Heart right ventricle (tissue), 16 donors: ENCODE measurements at regions of chr2 and their contacts with region 1.

Region 1: DNA sequence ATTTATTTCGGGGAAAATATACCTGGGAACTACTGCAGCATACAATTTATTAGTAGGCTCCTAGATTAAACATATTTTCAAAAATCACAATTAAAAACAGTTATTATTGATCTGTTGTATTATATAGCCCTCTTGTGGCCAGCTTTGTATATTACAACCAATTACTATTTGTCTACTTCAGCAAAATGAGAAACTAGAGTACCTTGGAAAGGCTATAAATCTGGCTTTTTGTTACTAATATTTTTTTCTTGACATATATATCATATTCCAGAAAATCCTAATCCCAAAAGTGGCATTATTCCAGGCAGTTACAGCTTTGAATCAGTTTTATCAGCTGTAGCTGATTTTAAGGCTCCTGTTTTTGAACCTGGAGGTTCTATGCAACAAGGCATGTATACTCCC is 101.2 kb downstream of the UBR3 start:
- DNase-seq: peak in 1 of 2 donors; percentile 8
- ATAC-seq: peak in 1 of 8 donors; percentile 38
- H3K4me3 ChIP-seq: no peak overlapping the region
- H3K27ac ChIP-seq: no peak overlapping the region
- H3K4me1 ChIP-seq: peaks cover 0 to 3% (median 0%) of the 10 kb centered on the region in 9 donors
- H3K27me3 ChIP-seq: no peaks in the 10 kb centered on the region
- CTCF ChIP-seq: peak; percentile 56 to 82 (median 72)

Region 2: DNA sequence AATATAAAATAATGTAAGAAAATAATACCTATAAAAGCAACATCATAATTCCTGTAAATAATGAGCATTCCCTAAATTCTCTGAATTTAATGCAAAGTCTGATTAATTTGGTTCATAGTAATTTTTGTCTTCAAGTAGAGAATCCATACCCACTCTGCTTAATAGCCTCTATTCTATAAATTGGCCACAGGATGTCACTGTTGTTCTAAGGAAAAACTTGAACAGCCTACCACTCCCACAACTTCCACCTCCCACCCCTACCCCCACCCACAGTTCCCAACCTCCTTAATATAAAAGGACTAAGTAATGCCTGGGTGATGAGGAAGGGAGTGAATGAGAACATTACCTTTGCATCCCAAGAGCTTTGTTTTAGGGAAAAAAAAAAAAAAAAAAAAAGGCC is 476.4 kb before region 1 on chr2:
- intact Hi-C with region 1: loop called in 1 of 10 experiments (anchors 5 kb)
- DNase-seq: no peak
- ATAC-seq: no peak
- H3K4me3 ChIP-seq: no peak overlapping the region
- H3K27ac ChIP-seq: no peak overlapping the region
- H3K4me1 ChIP-seq: no peaks in the 10 kb centered on the region
- H3K27me3 ChIP-seq: no peaks in the 10 kb centered on the region
- CTCF ChIP-seq: peak in 7 of 9 donors; percentile 36 to 60 (median 51)